ENCODE measurements at regions of chr16 and their contacts with region 1.

Region 1: DNA sequence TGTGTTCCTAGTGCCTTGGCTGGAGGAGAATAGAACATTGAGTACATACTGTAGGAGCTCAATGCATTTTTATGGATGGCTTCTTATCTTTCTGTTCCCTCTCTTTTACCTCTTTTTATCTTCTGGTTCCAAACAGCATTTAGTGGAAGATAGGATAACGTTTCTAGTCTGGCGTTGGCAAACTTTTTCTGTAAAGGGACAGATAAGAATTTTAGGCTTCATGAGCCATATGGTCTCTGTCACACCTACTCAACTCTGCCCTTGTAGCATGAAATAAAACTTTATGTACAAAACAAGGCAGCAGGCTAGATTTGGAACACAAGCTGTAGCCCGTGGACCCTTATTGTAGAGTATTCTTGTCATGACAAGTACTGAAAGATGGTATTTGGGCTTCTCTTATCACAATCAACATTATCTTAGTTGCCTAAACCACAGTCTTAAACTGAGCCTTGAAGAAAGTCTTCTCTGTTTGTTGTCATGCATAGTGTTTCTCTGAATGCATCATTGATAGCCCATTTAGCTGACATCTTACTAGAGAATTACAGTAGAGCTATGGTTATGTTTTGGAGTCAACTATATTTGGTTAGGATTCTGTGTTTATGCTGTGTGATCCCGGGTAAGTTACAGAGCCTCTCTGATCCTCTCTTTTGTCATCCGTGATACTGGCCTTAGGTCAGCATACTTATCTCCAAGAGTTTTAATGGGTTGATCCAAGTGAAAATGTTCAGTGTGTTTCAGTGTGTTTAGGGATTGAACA is 80.2 kb downstream of the HS3ST4 start:
- DNase-seq: no peak
- ATAC-seq: no peak
- H3K4me3 ChIP-seq: no peak overlapping the region
- H3K27ac ChIP-seq: no peak overlapping the region
- H3K4me1 ChIP-seq: no peaks in the 10 kb centered on the region
- H3K27me3 ChIP-seq: no peaks in the 10 kb centered on the region
- CTCF ChIP-seq: no peak

Region 2: DNA sequence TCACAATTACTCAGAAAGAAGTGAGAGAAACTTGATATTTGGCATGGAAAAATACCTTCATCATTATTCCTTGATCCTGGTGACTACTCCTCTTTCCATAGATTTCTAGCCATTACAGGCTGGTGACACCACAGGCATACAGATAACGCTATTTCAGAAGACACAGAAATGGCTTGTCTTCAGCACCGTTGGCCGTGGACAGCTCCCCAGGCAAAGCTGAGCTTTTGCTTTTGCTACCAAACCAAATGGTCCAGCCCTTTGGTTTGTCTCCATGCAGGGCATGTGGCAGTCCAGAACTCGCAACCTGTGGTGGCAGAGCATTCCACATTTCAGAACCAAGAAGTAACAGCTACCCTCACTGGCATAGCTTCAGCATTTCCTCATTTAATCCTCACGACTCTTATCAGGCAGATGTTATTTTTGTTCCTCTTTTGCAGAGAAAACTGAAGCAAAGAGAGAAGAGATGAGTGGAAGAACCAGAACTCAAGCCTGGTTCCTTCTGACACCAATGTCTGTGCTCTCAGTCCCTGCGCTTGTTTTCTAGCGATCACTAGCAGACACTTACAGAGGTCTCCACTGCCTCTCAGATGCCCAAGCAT is 24.7 kb before region 1 on chr16:
- intact Hi-C with region 1: loop called in 1 of 10 experiments (anchors 2 kb)
- DNase-seq: no peak
- ATAC-seq: no peak
- H3K4me3 ChIP-seq: no peak overlapping the region
- H3K27ac ChIP-seq: no peak overlapping the region
- H3K4me1 ChIP-seq: no peaks in the 10 kb centered on the region
- H3K27me3 ChIP-seq: peaks cover 0 to 6% (median 0%) of the 10 kb centered on the region in 7 donors
- CTCF ChIP-seq: no peak

Measured in heart right ventricle (tissue), 16 donors.